K562 (cell line): ENCODE measurements at regions of chr5 and their contacts with region 1.

Region 1: GRCh38 chr5:130724658-130725057 is 440.4 kb downstream of the HINT1 start:
- DNase-seq: no peak
- ATAC-seq: no peak
- H3K4me3 ChIP-seq: no peak overlapping the region
- H3K27ac ChIP-seq: no peak overlapping the region
- H3K4me1 ChIP-seq: no peaks in the 10 kb centered on the region
- H3K27me3 ChIP-seq: no peaks in the 10 kb centered on the region
- CTCF ChIP-seq: no peak
- EP300 ChIP-seq: no peak
- POLR2A ChIP-seq: no peak
- RAD21 ChIP-seq: no peak

Region 2: GRCh38 chr5:130762031-130762430 is 37.4 kb after region 1 on chr5:
- CTCF ChIA-PET with region 1: no interaction called
- POLR2A ChIA-PET with region 1: no interaction called
- in situ Hi-C with region 1: no loop called
- intact Hi-C with region 1: loop called (anchors 5 kb)
- DNase-seq: no peak
- ATAC-seq: no peak
- H3K4me3 ChIP-seq: no peak overlapping the region
- H3K27ac ChIP-seq: no peak overlapping the region
- H3K4me1 ChIP-seq: no peaks in the 10 kb centered on the region
- H3K27me3 ChIP-seq: no peaks in the 10 kb centered on the region
- CTCF ChIP-seq: no peak
- EP300 ChIP-seq: no peak
- POLR2A ChIP-seq: no peak
- RAD21 ChIP-seq: no peak